Calu3 (cell line): ENCODE measurements at regions of chr7 and their contacts with region 1.

Region 1: DNA sequence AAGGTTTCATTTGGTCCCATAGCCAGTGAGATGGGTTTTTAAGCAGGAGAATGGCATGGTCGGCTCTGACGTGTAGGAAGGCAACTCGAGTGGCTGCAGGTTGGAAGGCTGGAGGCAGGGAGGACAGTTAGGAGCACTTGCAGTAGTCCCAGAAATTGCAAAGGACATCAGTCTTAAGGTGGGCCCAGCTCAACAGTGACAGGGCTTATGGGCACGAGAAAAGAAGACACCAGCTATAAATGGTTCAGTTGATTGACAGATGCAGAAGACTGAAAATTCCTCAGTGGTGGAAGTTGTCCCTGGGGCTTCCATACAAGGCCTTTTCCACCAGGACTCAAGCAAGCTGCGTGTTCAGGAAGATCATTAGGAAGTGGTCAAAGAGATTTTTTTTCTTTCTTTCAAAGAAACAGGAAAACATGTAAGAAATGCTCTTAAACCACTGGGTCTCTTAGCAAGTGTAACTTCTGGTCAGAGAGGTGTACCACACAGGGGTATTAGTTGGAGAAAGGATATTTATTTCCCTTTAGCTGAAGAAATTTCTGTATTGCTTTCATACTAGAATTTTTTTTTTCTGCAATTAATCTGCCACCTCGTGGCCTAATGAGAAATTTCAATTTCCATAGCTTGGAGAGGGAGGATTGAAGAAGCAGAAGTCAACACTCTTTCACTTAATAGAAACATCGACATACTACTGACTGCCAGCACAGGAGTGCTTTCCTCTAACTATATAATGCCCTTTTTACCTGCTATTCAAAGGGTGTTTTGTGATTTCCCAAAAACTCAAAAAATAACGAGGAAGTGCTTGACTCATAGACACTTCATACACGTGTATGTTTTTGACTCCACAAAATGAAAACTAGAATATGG is 177.4 kb upstream of the NAMPT start:
- DNase-seq: peak; percentile 50
- H3K4me3 Mint-ChIP-seq: peak overlapping the region; percentile 3
- H3K27ac Mint-ChIP-seq: peak overlapping the region; percentile 59
- H3K4me1 Mint-ChIP-seq: peaks cover 51% of the 10 kb centered on the region
- H3K27me3 Mint-ChIP-seq: no peaks in the 10 kb centered on the region
- CTCF ChIP-seq: peak; percentile 40

Region 2: DNA sequence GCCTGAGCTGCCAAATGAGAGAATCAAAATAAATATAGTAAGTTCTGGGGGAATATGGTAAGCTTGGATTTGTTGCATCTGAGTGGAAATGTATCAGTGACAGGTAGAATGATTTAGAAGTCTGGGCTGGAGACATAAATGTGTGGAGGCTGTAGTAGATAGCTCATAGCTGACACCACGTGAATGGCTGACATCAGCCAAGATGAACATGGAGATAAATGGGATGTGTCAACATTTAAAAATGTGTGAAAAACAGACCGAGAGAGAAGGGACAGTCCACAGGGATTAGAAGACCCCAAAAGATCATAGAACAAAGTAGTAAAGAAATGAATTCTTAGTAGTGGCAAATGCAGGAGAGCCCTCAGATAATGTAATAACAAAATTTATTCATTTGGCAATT is 218.3 kb before region 1 on chr7:
- CTCF ChIA-PET with region 1: no interaction called
- intact Hi-C with region 1: no loop called
- DNase-seq: no peak
- H3K4me3 Mint-ChIP-seq: no peak overlapping the region
- H3K27ac Mint-ChIP-seq: peak overlapping the region; percentile 65
- H3K4me1 Mint-ChIP-seq: peaks cover 7% of the 10 kb centered on the region
- H3K27me3 Mint-ChIP-seq: no peaks in the 10 kb centered on the region
- CTCF ChIP-seq: no peak

Region 3: DNA sequence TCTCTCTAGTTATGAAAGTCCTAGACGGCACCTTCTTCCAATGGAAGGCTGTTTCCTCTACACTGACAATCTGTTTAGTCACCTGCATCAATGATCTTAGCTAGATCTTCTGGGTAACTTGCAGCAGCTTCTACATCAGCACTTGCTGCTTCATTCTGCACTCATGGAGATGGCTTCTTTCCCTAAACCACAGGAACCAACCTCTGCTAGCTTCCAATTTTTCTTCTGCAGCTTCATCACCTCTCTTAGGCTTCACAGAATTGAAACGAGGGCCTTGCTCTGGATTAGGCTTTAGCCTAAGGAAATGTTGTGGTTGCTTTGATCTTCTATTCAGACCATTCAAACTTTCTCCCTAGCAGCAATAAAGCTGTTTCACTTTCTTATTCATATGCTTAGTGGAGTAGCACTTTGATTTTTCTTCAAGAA is 202.1 kb before region 1 on chr7:
- CTCF ChIA-PET with region 1: no interaction called
- intact Hi-C with region 1: loop called (anchors 5 kb)
- DNase-seq: no peak
- H3K4me3 Mint-ChIP-seq: no peak overlapping the region
- H3K27ac Mint-ChIP-seq: peak overlapping the region; percentile 62
- H3K4me1 Mint-ChIP-seq: peaks cover 25% of the 10 kb centered on the region
- H3K27me3 Mint-ChIP-seq: no peaks in the 10 kb centered on the region
- CTCF ChIP-seq: no peak

Region 4: GRCh38 chr7:106285051-106285854 is 177.0 kb before region 1 on chr7:
- CTCF ChIA-PET with region 1: interaction called, 8 read pairs
- intact Hi-C with region 1: loop called (anchors 1 kb)
- DNase-seq: peak; percentile 100
- H3K4me3 Mint-ChIP-seq: peak overlapping the region; percentile 92
- H3K27ac Mint-ChIP-seq: peak overlapping the region; percentile 92
- H3K4me1 Mint-ChIP-seq: peaks cover 13% of the 10 kb centered on the region
- H3K27me3 Mint-ChIP-seq: no peaks in the 10 kb centered on the region
- CTCF ChIP-seq: no peak

Region 5: GRCh38 chr7:106358103-106358663 is 104.0 kb before region 1 on chr7:
- CTCF ChIA-PET with region 1: no interaction called
- intact Hi-C with region 1: loop called (anchors 1 kb)
- DNase-seq: peak; percentile 43
- H3K4me3 Mint-ChIP-seq: no peak overlapping the region
- H3K27ac Mint-ChIP-seq: peak overlapping the region; percentile 96
- H3K4me1 Mint-ChIP-seq: peaks cover 34% of the 10 kb centered on the region
- H3K27me3 Mint-ChIP-seq: no peaks in the 10 kb centered on the region
- CTCF ChIP-seq: no peak

Region 6: DNA sequence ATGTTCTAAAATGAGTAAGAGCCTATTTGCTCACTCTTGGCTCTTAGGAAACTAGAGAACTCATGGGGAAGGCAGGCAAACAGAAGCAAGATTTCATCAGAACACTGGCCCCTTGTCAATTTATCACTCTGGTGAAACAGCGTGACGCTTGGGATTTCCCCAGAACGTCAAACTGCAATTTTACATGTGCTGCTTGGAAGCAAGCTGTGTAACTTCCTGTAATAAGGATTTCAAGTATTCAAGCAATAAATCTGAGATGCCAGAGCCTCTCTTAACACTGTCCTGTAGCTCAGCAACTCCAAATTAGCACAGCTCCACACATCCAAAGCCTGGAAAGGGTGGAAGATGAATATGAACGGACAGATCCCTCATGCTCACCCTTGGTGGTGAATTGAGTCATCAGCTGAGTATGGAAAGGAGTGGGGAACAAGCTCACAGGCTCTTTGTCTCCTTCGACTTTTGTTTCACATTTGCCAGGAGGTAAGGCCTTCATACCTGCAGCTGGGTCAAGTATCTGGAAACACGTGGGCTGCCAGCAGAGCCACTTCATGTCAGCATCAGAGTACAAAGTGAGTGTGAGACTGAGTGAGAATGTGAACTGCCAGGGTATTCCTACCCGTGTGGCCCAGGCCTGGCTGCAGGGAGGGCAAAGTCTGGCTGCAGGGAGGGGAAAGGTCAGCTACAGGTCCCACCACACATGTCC is 37.1 kb before region 1 on chr7:
- CTCF ChIA-PET with region 1: interaction called, 7 read pairs
- intact Hi-C with region 1: loop called (anchors 2 kb)
- DNase-seq: peak; percentile 79
- H3K4me3 Mint-ChIP-seq: peak overlapping the region; percentile 21
- H3K27ac Mint-ChIP-seq: peak overlapping the region; percentile 94
- H3K4me1 Mint-ChIP-seq: peaks cover 83% of the 10 kb centered on the region
- H3K27me3 Mint-ChIP-seq: no peaks in the 10 kb centered on the region
- CTCF ChIP-seq: no peak

Region 7: GRCh38 chr7:106485031-106485551 is 22.9 kb after region 1 on chr7:
- CTCF ChIA-PET with region 1: interaction called, 13 read pairs
- intact Hi-C with region 1: no loop called
- DNase-seq: no peak
- H3K4me3 Mint-ChIP-seq: peak overlapping the region; percentile 30
- H3K27ac Mint-ChIP-seq: peak overlapping the region; percentile 88
- H3K4me1 Mint-ChIP-seq: peaks cover 51% of the 10 kb centered on the region
- H3K27me3 Mint-ChIP-seq: no peaks in the 10 kb centered on the region
- CTCF ChIP-seq: no peak

Region 8: DNA sequence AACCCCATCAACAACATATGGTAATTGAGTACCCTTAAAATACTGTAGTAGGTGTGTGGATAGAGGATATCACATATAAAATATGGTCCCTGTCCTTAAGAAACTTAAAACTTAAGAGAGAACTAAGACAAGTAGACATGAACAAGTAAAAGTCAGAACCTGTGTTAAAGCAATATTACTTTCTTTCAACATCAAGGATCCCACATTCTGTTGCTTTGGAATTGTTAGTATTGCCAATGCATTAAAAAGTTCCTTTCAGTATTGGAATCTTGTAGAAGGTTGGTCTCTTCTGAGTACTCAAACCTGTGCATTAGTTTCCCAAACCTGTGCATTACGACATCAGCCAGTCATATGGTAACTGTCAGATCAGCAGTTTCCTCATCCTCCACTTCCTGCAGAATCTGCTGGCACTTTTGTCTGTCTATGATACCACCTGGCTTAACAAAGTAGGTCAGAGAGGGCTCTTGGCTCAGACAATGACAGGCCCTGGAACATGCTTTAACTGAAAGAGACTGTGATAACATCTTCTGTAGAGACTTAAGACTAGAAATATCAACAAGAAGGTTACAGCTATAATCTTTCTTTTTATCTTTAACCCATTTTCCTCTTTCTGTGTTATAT is 142.2 kb after region 1 on chr7:
- CTCF ChIA-PET with region 1: no interaction called
- intact Hi-C with region 1: no loop called
- DNase-seq: no peak
- H3K4me3 Mint-ChIP-seq: no peak overlapping the region
- H3K27ac Mint-ChIP-seq: no peak overlapping the region
- H3K4me1 Mint-ChIP-seq: no peaks in the 10 kb centered on the region
- H3K27me3 Mint-ChIP-seq: no peaks in the 10 kb centered on the region
- CTCF ChIP-seq: no peak

Region 9: DNA sequence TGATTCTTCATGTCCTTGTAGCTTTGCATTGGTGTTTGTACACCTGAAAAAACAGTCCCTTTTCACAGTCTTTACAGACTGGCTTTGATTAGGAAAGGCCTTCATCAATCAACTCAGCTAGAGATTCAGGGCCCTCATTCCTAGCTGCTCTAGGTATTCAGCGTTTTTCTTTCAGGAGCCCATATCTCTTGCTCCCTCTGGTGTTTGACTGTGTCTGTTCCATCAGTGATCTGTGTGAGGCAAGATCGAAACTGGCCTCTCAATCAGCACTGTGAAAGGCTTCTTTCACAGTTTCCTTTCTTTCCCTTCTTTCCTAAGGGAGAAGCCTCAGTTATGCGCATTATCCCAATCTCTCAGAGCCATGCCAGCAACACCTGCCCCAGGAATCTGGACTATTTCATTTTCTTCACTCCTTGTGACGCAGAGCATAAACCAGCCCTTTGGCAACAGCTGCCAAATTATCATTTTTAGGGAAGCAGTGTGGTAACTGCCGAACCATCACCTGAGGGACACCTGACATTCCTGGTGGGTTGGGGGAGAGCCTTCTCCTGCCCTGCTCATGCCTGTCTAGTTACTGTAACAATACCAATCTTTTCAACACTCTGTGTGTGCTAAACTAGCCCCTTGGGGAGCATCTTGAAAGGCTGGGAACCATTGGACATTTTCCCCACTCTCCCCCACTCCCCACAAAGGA is 274.4 kb after region 1 on chr7:
- CTCF ChIA-PET with region 1: interaction called, 3 read pairs
- intact Hi-C with region 1: loop called (anchors 2 kb)
- DNase-seq: peak; percentile 62
- H3K4me3 Mint-ChIP-seq: peak overlapping the region; percentile 40
- H3K27ac Mint-ChIP-seq: peak overlapping the region; percentile 48
- H3K4me1 Mint-ChIP-seq: peaks cover 16% of the 10 kb centered on the region
- H3K27me3 Mint-ChIP-seq: no peaks in the 10 kb centered on the region
- CTCF ChIP-seq: peak; percentile 30

Region 10: DNA sequence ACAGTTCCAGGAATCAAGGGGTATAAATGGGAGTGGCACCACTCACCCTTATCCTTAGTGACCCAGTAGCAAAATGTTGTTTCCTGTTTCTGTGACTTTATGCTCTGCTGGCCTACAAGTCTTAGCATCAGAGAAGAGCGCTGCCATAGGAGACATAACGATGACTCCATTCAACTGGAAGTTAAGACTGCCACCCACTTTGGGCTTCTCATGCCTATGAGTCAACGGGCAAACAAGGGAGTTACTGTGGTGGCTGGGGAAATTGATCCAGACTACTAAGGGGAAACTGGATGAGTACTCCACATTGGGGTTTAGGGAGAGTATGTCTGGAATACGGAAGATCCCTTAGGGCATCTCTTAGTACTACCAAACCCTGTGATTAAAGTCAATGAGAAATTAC is 362.2 kb after region 1 on chr7:
- CTCF ChIA-PET with region 1: no interaction called
- intact Hi-C with region 1: no loop called
- DNase-seq: peak; percentile 51
- H3K4me3 Mint-ChIP-seq: no peak overlapping the region
- H3K27ac Mint-ChIP-seq: peak overlapping the region; percentile 71
- H3K4me1 Mint-ChIP-seq: peaks cover 26% of the 10 kb centered on the region
- H3K27me3 Mint-ChIP-seq: no peaks in the 10 kb centered on the region
- CTCF ChIP-seq: no peak